OCI-LY7 (cell line): ENCODE measurements at regions of chr12 and their contacts with region 1.

Region 1: GRCh38 chr12:22409377-22410164 is 75.1 kb upstream of the ST8SIA1 start:
- DNase-seq: no peak
- H3K4me3 ChIP-seq: no peak overlapping the region
- H3K27ac ChIP-seq: no peak overlapping the region
- H3K4me1 ChIP-seq: no peaks in the 10 kb centered on the region
- CTCF ChIP-seq: no peak

Region 2: GRCh38 chr12:22396253-22396652 is 13.3 kb before region 1 on chr12:
- CTCF ChIA-PET with region 1: no interaction called
- POLR2A ChIA-PET with region 1: interaction called, 11 read pairs
- intact Hi-C with region 1: no loop called
- DNase-seq: no peak
- H3K4me3 ChIP-seq: no peak overlapping the region
- H3K27ac ChIP-seq: no peak overlapping the region
- H3K4me1 ChIP-seq: no peaks in the 10 kb centered on the region
- CTCF ChIP-seq: no peak

Region 3: GRCh38 chr12:22459838-22460490 is 50.4 kb after region 1 on chr12:
- CTCF ChIA-PET with region 1: no interaction called
- POLR2A ChIA-PET with region 1: no interaction called
- intact Hi-C with region 1: no loop called
- DNase-seq: peak; percentile 67
- H3K4me3 ChIP-seq: no peak overlapping the region
- H3K27ac ChIP-seq: no peak overlapping the region
- H3K4me1 ChIP-seq: no peaks in the 10 kb centered on the region
- CTCF ChIP-seq: peak; percentile 84

Region 4: GRCh38 chr12:22505826-22506225 is 96.3 kb after region 1 on chr12:
- CTCF ChIA-PET with region 1: no interaction called
- POLR2A ChIA-PET with region 1: no interaction called
- intact Hi-C with region 1: no loop called
- DNase-seq: no peak
- H3K4me3 ChIP-seq: no peak overlapping the region
- H3K27ac ChIP-seq: no peak overlapping the region
- H3K4me1 ChIP-seq: no peaks in the 10 kb centered on the region
- CTCF ChIP-seq: no peak

Region 5: GRCh38 chr12:23169012-23169695 is 759.6 kb after region 1 on chr12:
- CTCF ChIA-PET with region 1: no interaction called
- POLR2A ChIA-PET with region 1: interaction called, 11 read pairs
- intact Hi-C with region 1: no loop called
- DNase-seq: no peak
- H3K4me3 ChIP-seq: no peak overlapping the region
- H3K27ac ChIP-seq: no peak overlapping the region
- H3K4me1 ChIP-seq: no peaks in the 10 kb centered on the region
- CTCF ChIP-seq: no peak

Region 6: GRCh38 chr12:23980826-23981225 is 1571.3 kb after region 1 on chr12:
- CTCF ChIA-PET with region 1: no interaction called
- POLR2A ChIA-PET with region 1: no interaction called
- intact Hi-C with region 1: no loop called
- DNase-seq: no peak
- H3K4me3 ChIP-seq: no peak overlapping the region
- H3K27ac ChIP-seq: no peak overlapping the region
- H3K4me1 ChIP-seq: no peaks in the 10 kb centered on the region
- CTCF ChIP-seq: no peak

Region 7: DNA sequence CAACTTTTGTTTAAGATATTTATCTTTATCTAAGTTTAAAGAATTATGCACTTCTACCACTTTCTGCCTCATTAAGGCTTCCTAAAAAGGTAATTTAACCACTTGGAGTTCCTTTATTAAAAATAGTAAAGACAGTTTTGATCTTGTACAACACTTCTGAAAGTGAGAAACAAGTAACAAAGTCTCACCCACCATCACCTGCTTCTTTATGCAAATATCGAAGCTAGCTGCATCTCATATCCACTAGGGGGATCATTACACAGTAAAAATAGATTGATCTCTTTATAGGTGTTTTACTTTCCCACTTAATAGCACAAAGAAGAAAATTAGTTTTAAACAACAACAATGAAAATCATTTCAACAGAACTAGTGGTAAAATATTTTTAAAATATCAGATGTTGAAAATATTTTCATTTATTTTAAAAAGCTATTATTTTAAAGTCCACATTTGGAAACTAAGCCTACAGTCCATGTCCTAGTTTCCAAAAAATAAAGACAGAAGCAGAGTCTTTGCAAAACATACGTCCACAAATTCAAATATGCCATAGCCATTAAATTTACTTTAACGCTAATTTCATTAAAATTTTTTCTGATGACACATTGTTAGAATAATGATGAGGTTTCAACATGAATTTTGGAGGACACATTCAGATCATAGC is 1699.9 kb after region 1 on chr12:
- CTCF ChIA-PET with region 1: no interaction called
- POLR2A ChIA-PET with region 1: no interaction called
- intact Hi-C with region 1: no loop called
- DNase-seq: peak; percentile 25
- H3K4me3 ChIP-seq: no peak overlapping the region
- H3K27ac ChIP-seq: no peak overlapping the region
- H3K4me1 ChIP-seq: no peaks in the 10 kb centered on the region
- CTCF ChIP-seq: peak; percentile 75